WTC11 (cell line): ENCODE measurements at regions of chr6 and their contacts with region 1.

Region 1: GRCh38 chr6:21593412-21593926 is at the start of gene SOX4:
- DNase-seq: peak; percentile 94
- ATAC-seq: peak; percentile 88
- H3K4me3 Mint-ChIP-seq: peak within 1 kb of the TSS; percentile 14; the same call in 1 of the 2 replicates
- H3K27ac Mint-ChIP-seq: peak within 1 kb of the TSS; percentile 96
- H3K4me1 Mint-ChIP-seq: peaks cover 15% of the 10 kb centered on the region
- H3K27me3 Mint-ChIP-seq: no peaks in the 10 kb centered on the region; the same call in 1 of the 2 replicates
- CTCF ChIP-seq: no peak
- total RNA-seq, gene SOX4: 167 to 182 TPM (median 169 TPM) in 3 replicates

Region 2: DNA sequence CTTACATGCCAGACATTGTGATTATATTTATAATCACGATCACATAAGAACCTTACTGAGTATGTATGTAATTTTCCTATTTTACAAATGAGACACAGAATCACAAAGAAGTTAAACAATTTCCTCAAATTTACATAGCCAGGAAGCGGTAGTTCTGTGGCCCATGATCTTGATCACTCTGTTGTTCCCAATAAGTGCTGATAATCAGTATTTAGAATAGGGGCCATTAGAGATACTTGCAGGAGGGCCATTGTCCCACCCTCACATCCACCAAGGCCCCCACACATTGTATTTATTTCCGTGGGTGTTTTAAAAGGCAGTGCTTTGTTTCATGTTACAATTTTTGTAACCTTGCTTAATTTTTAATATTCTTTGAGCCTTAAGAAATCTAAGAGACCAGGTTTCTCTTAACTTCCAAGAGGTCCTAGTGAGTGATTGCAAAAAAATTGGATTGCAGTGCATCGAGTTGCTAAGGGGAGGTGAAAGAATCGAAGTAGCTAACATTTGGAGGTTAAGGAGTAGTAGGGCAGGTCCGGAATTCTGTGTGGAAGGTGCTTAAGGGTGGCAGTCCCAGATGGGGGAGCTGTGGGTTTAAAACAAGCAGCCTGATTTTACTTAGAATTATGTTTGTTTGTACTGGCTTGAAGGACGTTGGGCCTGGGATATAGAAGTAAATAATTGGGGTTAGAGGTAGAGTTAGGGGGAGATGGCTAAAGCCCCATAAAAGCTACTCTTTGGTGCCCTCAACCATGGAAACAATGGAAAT is 719.9 kb before region 1 on chr6:
- CTCF ChIA-PET with region 1: interaction called, 14 read pairs
- POLR2A ChIA-PET with region 1: interaction called, 8 read pairs
- DNase-seq: no peak
- ATAC-seq: peak; percentile 73
- H3K4me3 Mint-ChIP-seq: peak overlapping the region; percentile 2; the same call in 1 of the 2 replicates
- H3K27ac Mint-ChIP-seq: peak overlapping the region; percentile 96
- H3K4me1 Mint-ChIP-seq: peaks cover 79% of the 10 kb centered on the region
- H3K27me3 Mint-ChIP-seq: no peaks in the 10 kb centered on the region
- CTCF ChIP-seq: no peak

Region 3: DNA sequence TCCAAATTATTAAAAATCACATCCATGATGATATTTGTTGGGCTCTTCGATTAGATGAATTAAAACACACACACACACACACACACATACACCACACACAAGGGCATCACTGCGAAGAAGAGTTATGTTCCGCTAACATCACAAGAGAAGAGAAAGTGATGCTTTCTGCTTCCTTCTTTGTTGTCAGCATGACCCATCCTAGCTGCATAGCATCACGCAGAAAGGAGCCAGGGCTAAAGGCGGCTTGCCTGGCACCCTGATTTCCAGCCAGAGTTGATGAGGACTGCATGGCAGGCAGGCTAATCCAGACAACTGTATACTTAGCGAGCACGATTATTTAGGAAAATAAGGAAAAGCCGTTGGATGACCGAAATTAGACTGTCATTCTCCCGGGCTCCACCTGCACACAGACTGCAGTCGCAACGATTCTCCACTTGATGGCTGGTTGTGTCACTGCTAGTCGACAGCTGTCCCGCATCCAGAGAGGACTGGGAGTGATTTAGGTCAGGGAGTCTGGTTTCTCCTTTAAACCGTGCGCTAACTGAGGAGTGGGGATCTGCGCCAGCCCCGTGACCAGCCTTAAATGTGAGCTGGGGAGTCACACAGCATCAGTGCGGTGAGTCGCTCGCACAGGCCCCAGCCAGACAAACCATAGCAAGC is 70.5 kb before region 1 on chr6:
- CTCF ChIA-PET with region 1: interaction called, 22 read pairs
- POLR2A ChIA-PET with region 1: interaction called, 3 read pairs
- DNase-seq: peak; percentile 50
- ATAC-seq: peak; percentile 96
- H3K4me3 Mint-ChIP-seq: no peak overlapping the region
- H3K27ac Mint-ChIP-seq: no peak overlapping the region
- H3K4me1 Mint-ChIP-seq: peaks cover 16% of the 10 kb centered on the region
- H3K27me3 Mint-ChIP-seq: no peaks in the 10 kb centered on the region
- CTCF ChIP-seq: no peak; the same call in 1 of the 2 replicates

Region 4: DNA sequence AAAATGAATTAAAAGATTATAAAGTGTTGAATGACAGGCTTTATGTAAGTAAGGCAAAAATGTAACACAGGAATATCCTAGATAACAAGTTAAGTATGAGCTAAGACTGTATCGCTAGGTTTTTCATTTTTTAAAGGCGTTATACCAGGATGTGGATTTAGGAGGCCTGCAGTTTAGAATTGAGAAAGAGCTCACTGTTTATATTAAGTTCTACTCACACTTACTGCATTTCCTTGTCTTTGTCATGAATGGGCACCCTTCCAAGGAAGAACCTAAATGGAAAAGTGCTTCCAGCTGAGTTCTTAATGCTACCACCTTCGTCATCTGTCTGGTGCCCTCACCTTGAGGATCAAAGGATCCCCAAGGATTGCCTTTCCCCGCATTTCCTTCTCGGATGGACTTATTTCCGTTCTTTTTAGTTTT is 148.8 kb after region 1 on chr6:
- CTCF ChIA-PET with region 1: interaction called, 7 read pairs
- POLR2A ChIA-PET with region 1: interaction called, 25 read pairs
- DNase-seq: no peak
- ATAC-seq: peak; percentile 31
- H3K4me3 Mint-ChIP-seq: peak overlapping the region; percentile 61
- H3K27ac Mint-ChIP-seq: peak overlapping the region; percentile 97
- H3K4me1 Mint-ChIP-seq: peaks cover 75% of the 10 kb centered on the region
- H3K27me3 Mint-ChIP-seq: no peaks in the 10 kb centered on the region
- CTCF ChIP-seq: no peak

Region 5: GRCh38 chr6:21759721-21760120 is 166.3 kb after region 1 on chr6:
- CTCF ChIA-PET with region 1: no interaction called
- POLR2A ChIA-PET with region 1: no interaction called
- DNase-seq: no peak
- ATAC-seq: no peak
- H3K4me3 Mint-ChIP-seq: no peak overlapping the region
- H3K27ac Mint-ChIP-seq: peak overlapping the region; percentile 23; the same call in 1 of the 2 replicates
- H3K4me1 Mint-ChIP-seq: peaks cover 39% of the 10 kb centered on the region
- H3K27me3 Mint-ChIP-seq: no peaks in the 10 kb centered on the region
- CTCF ChIP-seq: no peak